WTC11 (cell line): ENCODE measurements at regions of chr18 and their contacts with region 1.

Region 1: GRCh38 chr18:46772357-46772756 is 15.5 kb upstream of the ST8SIA5 start:
- DNase-seq: no peak
- ATAC-seq: peak; percentile 77
- H3K4me3 Mint-ChIP-seq: no peak overlapping the region
- H3K27ac Mint-ChIP-seq: no peak overlapping the region
- H3K4me1 Mint-ChIP-seq: peaks cover 42% of the 10 kb centered on the region
- H3K27me3 Mint-ChIP-seq: peaks cover 3% of the 10 kb centered on the region; the same call in 1 of the 2 replicates
- CTCF ChIP-seq: no peak

Region 2: DNA sequence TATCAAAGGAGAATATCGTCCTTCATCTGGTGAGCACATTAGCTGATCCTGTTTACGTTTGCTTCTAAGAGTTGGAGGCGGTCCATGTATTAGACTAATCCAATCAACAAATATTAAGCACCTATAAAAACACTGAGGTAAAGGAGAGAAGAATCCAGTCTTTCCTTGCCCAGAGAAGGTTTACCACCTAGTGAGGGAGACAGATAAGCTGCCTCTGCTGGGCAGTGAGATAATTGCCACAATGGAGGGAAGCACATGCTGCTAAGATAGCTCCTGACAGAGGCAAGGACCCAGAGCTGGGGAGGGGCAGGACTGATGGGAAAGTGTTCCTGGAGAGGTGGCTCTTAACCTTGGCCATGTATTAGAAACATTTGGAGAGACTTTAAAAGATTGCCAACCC is 21.2 kb after region 1 on chr18:
- CTCF ChIA-PET with region 1: interaction called, 23 read pairs
- POLR2A ChIA-PET with region 1: no interaction called
- DNase-seq: no peak
- ATAC-seq: peak; percentile 88
- H3K4me3 Mint-ChIP-seq: no peak overlapping the region
- H3K27ac Mint-ChIP-seq: no peak overlapping the region
- H3K4me1 Mint-ChIP-seq: peaks cover 16% of the 10 kb centered on the region
- H3K27me3 Mint-ChIP-seq: no peaks in the 10 kb centered on the region
- CTCF ChIP-seq: no peak

Region 3: GRCh38 chr18:46814399-46814798 is 42.0 kb after region 1 on chr18:
- CTCF ChIA-PET with region 1: interaction called, 3 read pairs
- POLR2A ChIA-PET with region 1: interaction called, 15 read pairs
- DNase-seq: no peak
- ATAC-seq: no peak
- H3K4me3 Mint-ChIP-seq: no peak overlapping the region
- H3K27ac Mint-ChIP-seq: no peak overlapping the region; the same call in 1 of the 2 replicates
- H3K4me1 Mint-ChIP-seq: peaks cover 15% of the 10 kb centered on the region
- H3K27me3 Mint-ChIP-seq: no peaks in the 10 kb centered on the region
- CTCF ChIP-seq: no peak